ENCODE measurements at regions of chr3 and their contacts with region 1.

Region 1: DNA sequence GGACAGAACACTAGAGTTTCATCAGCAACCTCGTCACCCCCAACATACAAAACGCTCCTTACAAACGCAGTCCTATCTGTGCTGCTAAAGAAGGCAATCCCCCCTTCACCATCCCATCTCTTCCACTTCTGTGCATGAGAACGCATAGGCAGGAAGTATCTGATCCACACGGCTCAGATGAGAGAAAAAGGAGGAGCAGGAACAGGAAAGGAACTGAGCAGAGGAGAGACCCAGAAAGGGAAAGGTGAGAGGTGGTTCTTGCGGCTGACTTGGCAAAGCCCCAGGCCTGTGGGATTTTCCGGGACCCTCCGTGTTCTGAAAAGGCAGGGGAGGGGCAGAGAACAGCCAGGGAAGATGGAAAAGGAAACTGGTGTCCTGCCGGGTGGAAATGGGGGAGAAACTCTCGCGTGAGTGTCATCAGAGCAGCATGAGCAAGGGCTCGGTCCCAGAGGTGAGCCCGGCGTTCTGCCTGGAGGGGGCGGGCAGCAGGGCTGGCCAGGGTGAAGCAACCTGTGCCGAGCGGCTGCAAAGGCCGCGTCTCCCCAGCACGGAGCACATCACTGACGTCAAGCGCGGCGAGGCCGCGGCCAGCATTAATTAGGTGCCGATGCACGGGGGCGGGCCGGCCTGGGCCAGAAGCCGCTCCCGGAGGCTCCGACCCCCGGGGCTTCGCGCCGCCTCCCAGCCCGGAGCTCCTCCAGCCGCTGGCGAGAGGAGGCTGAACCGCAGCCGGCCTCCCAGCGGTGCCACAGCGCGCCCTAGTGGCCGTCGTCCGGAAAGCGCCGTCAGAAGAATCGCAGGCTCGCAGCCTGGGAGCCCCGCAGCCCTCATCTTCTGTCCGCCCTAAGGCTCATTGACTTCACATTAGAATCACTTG is 35.8 kb downstream of the CPN2 start:
- DNase-seq: peak; percentile 89
- CTCF ChIP-seq: peak; percentile 96

Region 2: DNA sequence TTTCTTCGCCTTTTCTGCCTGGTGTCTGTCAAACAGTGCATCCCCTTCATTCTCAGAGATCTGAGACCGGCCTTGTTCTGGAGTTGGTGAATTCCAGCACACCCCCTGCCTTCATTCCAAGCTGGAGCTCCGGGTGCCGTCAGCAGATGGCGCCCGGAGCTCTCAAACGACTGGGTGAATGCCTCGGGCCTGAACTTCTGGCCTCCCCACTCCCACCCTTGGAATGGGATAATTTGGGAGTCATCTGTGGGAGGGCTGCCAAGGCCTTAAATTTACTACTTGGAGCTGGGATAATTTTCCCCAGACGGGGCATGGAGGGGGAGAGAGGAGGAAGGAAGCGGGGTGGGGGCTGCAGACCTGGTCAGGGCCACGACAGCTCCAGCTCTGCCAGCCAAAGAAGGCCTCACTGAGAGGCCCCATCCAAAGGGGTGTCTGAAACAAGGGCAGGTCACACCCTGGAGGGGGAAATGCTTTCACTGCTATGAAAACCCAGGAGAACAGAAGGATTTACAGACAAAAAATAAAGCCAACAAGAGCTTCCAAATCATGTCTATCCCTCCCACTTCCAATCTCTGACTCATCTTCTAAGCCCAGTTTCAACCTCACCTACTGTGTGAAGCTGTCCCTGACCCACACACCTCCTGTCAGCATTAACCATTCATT is 534.4 kb before region 1 on chr3:
- CTCF ChIA-PET with region 1: interaction called, 132 read pairs
- POLR2A ChIA-PET with region 1: no interaction called
- DNase-seq: peak; percentile 67
- CTCF ChIP-seq: peak; percentile 44

Region 3: GRCh38 chr3:194100856-194101390 is 214.4 kb before region 1 on chr3:
- CTCF ChIA-PET with region 1: interaction called, 13 read pairs
- POLR2A ChIA-PET with region 1: no interaction called
- DNase-seq: peak; percentile 82
- CTCF ChIP-seq: no peak

Region 4: DNA sequence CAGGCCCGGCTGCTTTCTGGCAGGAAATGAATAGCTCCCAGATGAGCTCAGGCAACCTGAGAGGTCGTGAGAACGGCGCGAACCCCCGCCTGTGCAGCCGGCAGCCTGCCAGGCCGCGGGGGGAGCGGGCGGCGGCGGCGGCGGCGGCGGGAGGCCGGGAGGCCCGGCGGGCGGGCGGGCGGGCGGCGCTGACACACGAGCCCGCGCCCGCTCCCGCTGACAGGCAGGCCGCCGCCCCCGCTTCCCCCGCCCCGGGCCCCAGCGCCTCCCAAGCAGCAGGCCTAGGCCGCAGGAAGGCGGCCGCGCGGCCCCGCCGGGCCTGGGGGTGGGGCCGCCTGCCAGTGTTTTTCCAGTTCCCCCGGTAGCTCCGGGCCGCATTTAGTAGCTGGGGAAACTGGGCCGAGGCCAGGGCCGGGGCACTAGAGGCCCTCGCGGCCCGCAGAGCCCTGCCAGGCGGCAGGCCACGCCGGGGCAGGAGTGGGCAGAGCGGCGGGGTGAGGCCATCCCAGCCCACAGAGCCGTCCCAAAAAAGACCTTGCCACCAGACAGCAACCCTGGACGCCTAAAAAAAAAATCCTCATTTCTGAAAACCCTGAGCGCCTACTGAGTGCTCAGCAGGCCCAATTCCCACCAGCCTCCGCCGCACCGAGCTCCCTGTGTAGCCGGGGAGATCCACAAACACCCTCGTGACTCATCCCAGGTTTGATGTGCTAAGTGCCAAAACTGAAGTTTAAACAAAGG is 173.7 kb before region 1 on chr3:
- CTCF ChIA-PET with region 1: interaction called, 22 read pairs
- POLR2A ChIA-PET with region 1: no interaction called
- DNase-seq: peak; percentile 81
- CTCF ChIP-seq: no peak

Region 5: GRCh38 chr3:194300382-194300758 is 15.0 kb before region 1 on chr3:
- CTCF ChIA-PET with region 1: interaction called, 22 read pairs
- POLR2A ChIA-PET with region 1: no interaction called
- DNase-seq: no peak
- CTCF ChIP-seq: no peak

Region 6: GRCh38 chr3:194344012-194344411 is 28.7 kb after region 1 on chr3:
- CTCF ChIA-PET with region 1: interaction called, 16 read pairs
- POLR2A ChIA-PET with region 1: no interaction called
- DNase-seq: peak; percentile 84
- CTCF ChIP-seq: peak; percentile 88